Mammary epithelial cell (primary cell): ENCODE measurements at regions of chr11 and their contacts with region 1.

Region 1: GRCh38 chr11:73570415-73571114 is 27.3 kb downstream of the FAM168A start:
- DNase-seq: peak; percentile 99
- H3K4me3 ChIP-seq: peak overlapping the region in 2 of 3 experiments; percentile 10 to 11
- H3K27ac ChIP-seq: peak overlapping the region; percentile 82
- H3K4me1 ChIP-seq: peaks cover 17% of the 10 kb centered on the region
- H3K27me3 ChIP-seq: no peaks in the 10 kb centered on the region
- CTCF ChIP-seq: no peak

Region 2: DNA sequence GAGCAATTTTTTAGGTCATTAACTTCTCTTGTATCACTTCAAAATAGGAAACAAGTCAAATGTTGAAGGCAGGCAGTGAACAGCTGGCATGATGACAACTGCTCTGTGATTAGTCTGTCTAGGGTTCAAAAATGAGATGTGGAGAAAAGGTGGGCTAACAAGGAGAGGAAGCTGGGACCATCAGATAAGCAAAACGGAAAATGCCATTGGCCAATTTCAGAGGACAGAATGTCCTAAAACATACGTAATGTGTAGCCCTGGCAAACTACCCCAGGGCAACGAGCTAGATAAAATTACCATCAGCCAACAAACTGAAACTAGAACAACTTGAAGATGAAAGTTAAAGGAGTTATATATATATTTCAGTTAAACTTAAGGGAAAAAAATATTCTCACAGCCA is 101.2 kb before region 1 on chr11:
- CTCF ChIA-PET with region 1: no interaction called
- dilution Hi-C with region 1: loop called (anchors 5 kb)
- in situ Hi-C with region 1: no loop called
- intact Hi-C with region 1: no loop called
- DNase-seq: no peak
- H3K4me3 ChIP-seq: no peak overlapping the region
- H3K27ac ChIP-seq: no peak overlapping the region
- H3K4me1 ChIP-seq: no peaks in the 10 kb centered on the region
- H3K27me3 ChIP-seq: no peaks in the 10 kb centered on the region
- CTCF ChIP-seq: no peak

Region 3: GRCh38 chr11:73530109-73530508 is 40.5 kb before region 1 on chr11:
- CTCF ChIA-PET with region 1: interaction called, 11 read pairs
- dilution Hi-C with region 1: no loop called
- in situ Hi-C with region 1: no loop called
- intact Hi-C with region 1: no loop called
- DNase-seq: no peak
- H3K4me3 ChIP-seq: no peak overlapping the region
- H3K27ac ChIP-seq: no peak overlapping the region
- H3K4me1 ChIP-seq: peaks cover 22% of the 10 kb centered on the region
- H3K27me3 ChIP-seq: no peaks in the 10 kb centered on the region
- CTCF ChIP-seq: peak; percentile 22 to 51

Region 4: GRCh38 chr11:73585834-73586575 is 15.4 kb after region 1 on chr11:
- CTCF ChIA-PET with region 1: interaction called, 23 read pairs
- dilution Hi-C with region 1: no loop called
- in situ Hi-C with region 1: no loop called
- intact Hi-C with region 1: no loop called
- DNase-seq: peak; percentile 70
- H3K4me3 ChIP-seq: no peak overlapping the region
- H3K27ac ChIP-seq: no peak overlapping the region
- H3K4me1 ChIP-seq: peaks cover 8% of the 10 kb centered on the region
- H3K27me3 ChIP-seq: no peaks in the 10 kb centered on the region
- CTCF ChIP-seq: no peak

Region 5: DNA sequence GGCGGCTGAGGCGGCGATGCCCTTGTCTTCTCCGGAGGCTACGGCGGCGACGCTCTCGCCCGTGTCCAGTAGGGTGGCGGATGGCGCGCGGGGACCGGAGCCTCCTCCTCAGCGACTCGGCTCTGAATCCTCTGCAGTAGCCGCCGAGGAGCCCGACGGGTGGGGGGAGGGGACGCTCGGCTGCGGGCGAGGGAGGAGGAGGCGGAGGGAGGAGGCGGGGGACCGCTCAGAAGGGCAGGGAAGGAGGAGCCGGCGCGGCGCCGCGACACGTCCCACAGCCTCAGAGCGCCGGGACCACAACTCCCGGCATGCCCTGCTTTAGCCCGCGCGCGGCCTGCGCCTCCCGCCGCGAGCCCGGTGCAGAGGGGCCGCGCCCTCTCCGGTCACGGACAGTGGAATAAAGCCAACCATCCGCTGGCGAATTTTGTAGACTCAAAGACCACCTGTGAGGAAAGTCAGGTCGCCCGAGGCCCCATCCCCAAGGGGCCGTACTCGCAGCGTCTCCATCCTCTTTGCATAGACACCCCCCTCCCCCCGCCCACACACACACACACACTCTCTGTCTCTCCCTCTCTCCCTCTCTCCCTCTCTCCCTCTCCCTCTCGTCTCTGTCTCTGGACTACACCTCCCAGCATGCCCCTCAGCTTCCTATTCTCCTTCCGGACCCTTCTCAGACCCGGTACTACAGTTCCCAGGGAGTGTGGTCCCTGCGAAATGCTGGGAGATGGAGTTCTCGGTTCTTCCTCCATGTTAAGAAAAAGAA is 27.6 kb after region 1 on chr11 and contains the start of gene FAM168A:
- CTCF ChIA-PET with region 1: no interaction called
- dilution Hi-C with region 1: no loop called
- in situ Hi-C with region 1: no loop called
- intact Hi-C with region 1: loop called (anchors 1 kb)
- DNase-seq: peak; percentile 98
- H3K4me3 ChIP-seq: peak within 1 kb of the TSS; percentile 68 to 100 (median 75)
- H3K27ac ChIP-seq: peak within 1 kb of the TSS; percentile 48
- H3K4me1 ChIP-seq: peaks cover 8% of the 10 kb centered on the region
- H3K27me3 ChIP-seq: no peaks in the 10 kb centered on the region
- CTCF ChIP-seq: peak; percentile 5 to 31
- total RNA-seq, gene FAM168A: 28.2 to 33.4 TPM